ENCODE measurements at regions of chr1 and their contacts with region 1.

Region 1: GRCh38 chr1:113811888-113812660 is at the start of gene RSBN1:
- DNase-seq: peak; percentile 99
- H3K4me3 Mint-ChIP-seq: peak within 1 kb of the TSS; percentile 98
- H3K27ac Mint-ChIP-seq: peak within 1 kb of the TSS; percentile 92
- H3K4me1 Mint-ChIP-seq: peaks cover 36% of the 10 kb centered on the region
- H3K27me3 Mint-ChIP-seq: no peaks in the 10 kb centered on the region
- total RNA-seq, gene RSBN1: 27.9 to 32.1 TPM

Region 2: DNA sequence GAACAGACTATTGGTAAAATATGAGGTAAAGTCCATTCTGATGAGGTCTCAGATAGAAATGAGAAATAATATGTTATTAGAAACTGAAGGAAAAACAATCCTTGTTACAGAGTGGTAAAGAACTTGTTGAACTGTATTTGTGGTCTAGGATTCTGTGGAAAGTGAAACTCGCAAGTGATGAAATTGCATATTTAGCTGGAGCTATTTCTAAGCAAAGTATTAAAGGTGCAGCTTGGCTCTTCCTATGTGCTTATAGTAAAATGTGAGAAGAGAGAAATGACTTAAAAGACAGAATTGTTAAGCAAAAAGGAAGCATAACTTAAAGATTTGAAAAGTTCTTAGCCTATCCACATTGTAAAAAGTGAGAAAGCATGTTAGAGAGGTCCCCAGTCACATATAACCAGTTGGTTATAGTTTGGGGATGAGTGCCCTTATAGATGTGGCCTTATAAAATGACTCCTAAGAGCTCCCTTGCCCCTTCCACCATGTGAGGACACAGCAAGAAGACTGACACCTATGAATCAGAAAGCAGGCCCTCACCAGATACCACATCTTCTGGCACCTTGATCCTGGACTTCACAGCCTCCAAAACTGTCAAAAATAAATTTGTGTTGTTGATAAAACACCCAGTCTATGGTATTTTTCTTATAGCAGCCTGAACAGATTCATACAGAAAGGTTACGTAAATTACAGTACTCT is 77.6 kb before region 1 on chr1:
- CTCF ChIA-PET with region 1: no interaction called
- POLR2A ChIA-PET with region 1: interaction called, 10 read pairs
- DNase-seq: no peak
- H3K4me3 Mint-ChIP-seq: no peak overlapping the region
- H3K27ac Mint-ChIP-seq: peak overlapping the region; percentile 65
- H3K4me1 Mint-ChIP-seq: peaks cover 17% of the 10 kb centered on the region
- H3K27me3 Mint-ChIP-seq: no peaks in the 10 kb centered on the region

Region 3: DNA sequence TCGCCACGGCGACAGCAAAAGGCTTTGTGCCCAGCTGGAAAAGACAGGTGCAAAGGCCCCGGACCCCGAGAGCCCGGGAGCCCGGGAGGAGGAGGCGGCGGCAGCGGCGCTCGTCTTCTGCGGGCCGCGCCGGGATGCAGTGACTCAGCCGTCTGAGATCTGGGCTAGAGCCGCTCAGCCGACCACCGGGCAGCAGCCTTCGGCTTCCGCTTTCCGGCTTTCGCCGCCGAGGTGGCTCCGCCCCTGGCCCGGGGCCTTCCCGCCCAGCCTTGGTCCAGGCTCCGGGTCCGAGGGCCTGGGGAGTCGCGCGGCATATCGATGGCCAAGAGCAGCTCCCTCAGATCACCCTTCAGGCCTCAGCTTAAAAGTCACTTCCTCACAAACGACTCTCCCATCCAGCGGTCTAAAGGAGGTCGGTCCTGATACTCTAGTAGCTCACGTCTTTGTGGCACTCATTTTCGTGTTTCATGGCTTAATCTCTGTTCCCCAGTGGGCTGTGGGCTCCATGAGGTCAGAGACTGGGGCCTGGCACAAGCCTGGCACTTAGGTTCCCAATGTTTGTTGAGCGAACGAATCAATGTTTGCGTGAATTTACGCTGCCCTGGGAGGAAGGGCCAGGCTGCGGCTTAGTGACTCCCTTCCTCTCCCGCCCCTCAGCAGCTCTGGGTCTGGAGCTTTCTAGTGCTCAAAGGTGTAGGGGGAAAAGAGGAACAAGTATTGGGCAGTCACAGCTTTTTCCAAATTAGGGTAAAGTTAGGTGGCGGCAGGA is 52.6 kb before region 1 on chr1 and contains the start of gene PHTF1:
- CTCF ChIA-PET with region 1: interaction called, 24 read pairs
- POLR2A ChIA-PET with region 1: interaction called, 73 read pairs
- DNase-seq: peak; percentile 69
- H3K4me3 Mint-ChIP-seq: peak within 1 kb of the TSS; percentile 88
- H3K27ac Mint-ChIP-seq: peak within 1 kb of the TSS; percentile 91
- H3K4me1 Mint-ChIP-seq: peaks cover 41% of the 10 kb centered on the region
- H3K27me3 Mint-ChIP-seq: no peaks in the 10 kb centered on the region
- total RNA-seq, gene PHTF1: 22.1 to 23.0 TPM

Region 4: DNA sequence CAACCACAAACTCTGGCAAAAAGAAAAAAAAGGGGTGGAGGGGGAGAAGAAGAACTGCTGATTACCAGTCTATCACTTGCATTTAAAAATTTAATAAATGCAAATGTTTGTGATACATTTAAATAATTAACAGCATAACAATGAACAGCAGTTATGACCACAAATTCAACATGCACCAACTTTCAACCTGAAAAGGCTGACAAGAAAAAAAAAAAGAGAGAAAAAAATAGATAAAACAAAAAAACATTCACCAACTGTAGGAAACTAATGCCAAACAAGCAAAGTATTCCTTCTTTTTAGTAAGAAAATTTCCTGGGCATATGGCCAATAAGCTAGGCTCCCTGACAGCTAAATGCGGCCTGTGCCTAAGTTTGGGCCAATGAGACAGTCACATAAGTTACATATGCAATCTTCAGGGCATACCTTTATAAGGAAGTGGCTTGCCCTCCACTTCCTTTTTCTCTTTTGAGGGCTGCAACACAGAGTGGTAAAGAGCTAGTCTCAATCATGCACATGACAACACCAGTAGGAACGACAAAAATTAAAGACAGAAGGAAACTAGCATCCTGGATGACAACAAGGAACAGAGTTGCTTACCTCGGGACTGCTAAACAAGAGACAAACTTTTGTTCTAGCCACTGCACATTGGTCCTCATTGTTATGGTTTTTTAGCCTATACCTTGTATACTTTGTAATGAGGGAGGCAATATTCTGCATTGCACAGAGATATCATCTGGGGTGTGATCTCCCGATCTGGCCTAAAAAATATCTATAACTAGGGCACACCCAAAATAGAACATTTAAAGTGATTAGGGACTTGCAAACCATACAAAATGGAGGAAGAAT is 28.6 kb before region 1 on chr1:
- CTCF ChIA-PET with region 1: interaction called, 4 read pairs
- POLR2A ChIA-PET with region 1: interaction called, 54 read pairs
- DNase-seq: peak; percentile 66
- H3K4me3 Mint-ChIP-seq: peak overlapping the region; percentile 56
- H3K27ac Mint-ChIP-seq: peak overlapping the region; percentile 99
- H3K4me1 Mint-ChIP-seq: peaks cover 30% of the 10 kb centered on the region
- H3K27me3 Mint-ChIP-seq: no peaks in the 10 kb centered on the region

Region 5: DNA sequence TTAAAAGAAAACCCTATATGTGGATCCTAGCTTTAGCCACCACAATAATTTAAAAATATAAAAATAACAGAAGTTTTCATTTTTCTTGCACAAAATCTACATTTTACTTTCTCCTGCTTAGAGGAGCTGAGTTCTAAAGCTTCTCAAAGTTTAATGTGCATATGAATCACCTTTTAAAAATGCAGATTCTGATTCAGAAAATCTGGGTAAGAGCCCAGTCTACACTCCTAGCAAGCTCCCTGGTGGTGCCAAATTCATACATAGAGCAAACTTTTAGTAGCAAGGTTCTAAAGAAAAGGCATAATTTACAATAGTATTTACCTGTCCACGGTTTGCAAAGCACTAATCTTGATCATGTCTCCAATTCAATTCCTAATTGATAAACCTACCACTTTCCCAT is 19.1 kb before region 1 on chr1:
- CTCF ChIA-PET with region 1: no interaction called
- POLR2A ChIA-PET with region 1: interaction called, 10 read pairs
- DNase-seq: no peak
- H3K4me3 Mint-ChIP-seq: no peak overlapping the region
- H3K27ac Mint-ChIP-seq: no peak overlapping the region
- H3K4me1 Mint-ChIP-seq: peaks cover 27% of the 10 kb centered on the region
- H3K27me3 Mint-ChIP-seq: no peaks in the 10 kb centered on the region